ENCODE measurements at regions of chr6 and their contacts with region 1.

Region 1: DNA sequence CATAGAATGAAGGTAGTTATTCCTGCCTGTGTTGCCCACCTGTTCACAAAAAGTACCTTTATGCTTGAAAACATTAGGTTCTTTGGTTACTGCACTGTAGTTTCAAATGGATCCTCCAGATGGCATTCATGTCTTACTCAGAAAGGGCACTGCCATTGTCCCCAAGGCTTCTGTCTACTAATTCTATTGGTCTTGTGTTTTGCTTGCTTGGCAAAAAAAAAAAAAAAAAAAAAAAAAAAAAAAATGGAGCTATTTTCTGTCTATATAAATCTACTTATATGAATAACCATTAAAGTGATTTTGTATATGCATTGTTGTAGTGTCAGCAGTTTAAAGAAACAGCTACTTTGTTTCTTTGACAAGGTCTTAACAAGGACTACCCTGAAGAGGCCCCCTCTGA is 12.7 kb upstream of the EFHC1 start:
- DNase-seq: no peak
- H3K4me3 ChIP-seq: no peak overlapping the region
- CTCF ChIP-seq: peak; percentile 47

Region 2: GRCh38 chr6:52371656-52372191 is 35.7 kb before region 1 on chr6:
- CTCF ChIA-PET with region 1: no interaction called
- POLR2A ChIA-PET with region 1: no interaction called
- DNase-seq: no peak
- H3K4me3 ChIP-seq: no peak overlapping the region
- CTCF ChIP-seq: no peak

Region 3: DNA sequence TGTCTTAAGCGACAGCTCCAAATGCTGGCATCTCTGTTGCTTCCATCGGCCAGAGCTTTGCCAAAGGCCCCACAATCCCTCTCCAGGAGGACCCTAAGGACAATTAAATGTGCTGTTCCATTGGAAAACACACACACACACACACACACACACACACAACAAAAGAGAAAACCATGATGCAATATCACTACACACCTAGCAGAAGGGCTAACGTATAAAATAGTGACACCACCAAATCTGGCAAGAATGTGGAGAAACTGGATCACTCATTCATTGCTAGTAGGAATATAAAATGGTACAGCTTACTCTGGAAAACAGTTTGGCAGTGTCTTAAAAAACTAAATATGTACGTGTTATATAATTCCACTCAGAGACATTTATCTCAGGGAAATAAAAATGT is 250.4 kb after region 1 on chr6:
- CTCF ChIA-PET with region 1: interaction called, 141 read pairs
- POLR2A ChIA-PET with region 1: no interaction called
- DNase-seq: no peak
- H3K4me3 ChIP-seq: no peak overlapping the region
- CTCF ChIP-seq: no peak

Region 4: DNA sequence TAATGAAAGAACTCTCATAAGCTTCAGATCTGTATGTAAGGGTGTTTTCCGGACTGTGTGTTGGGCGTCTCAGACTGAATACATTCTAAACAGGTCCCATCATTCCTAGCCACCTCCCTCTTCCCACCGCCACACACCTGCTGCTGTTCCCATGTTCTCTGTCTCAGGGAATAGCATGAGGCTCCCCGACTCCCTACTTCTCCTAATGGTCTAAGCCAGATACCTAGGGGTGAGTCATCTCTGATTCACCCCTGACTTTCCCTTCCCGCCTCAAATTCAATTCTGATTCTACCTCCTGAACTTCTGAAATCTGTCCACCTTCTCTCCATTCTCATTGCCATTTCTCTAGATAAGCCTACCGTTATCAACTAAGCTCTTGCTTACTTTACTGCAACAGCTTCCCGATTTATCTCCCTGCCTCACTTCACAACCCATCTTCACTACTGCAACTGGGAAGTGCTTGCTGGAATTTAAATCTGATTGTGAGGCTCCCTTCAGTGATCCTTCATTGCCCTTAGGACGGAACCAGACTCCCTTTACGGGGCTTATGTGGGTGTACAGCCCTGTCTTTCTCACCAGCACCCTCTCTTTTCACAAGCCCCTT is 265.1 kb after region 1 on chr6:
- CTCF ChIA-PET with region 1: interaction called, 13 read pairs
- POLR2A ChIA-PET with region 1: no interaction called
- DNase-seq: no peak
- H3K4me3 ChIP-seq: no peak overlapping the region; the same call in 1 of the 2 replicates
- CTCF ChIP-seq: no peak

Measured in AG04449 (cell line).